MCF 10A (cell line): ENCODE measurements at regions of chr3 and their contacts with region 1.

Region 1: GRCh38 chr3:94249585-94249984 is 186.7 kb downstream of the NSUN3 start:
- DNase-seq: peak; percentile 81
- H3K4me3 Mint-ChIP-seq: no peak overlapping the region
- H3K27ac Mint-ChIP-seq: no peak overlapping the region
- H3K4me1 Mint-ChIP-seq: peaks cover 5% of the 10 kb centered on the region
- H3K27me3 Mint-ChIP-seq: peaks cover 77% of the 10 kb centered on the region
- CTCF ChIP-seq: peak; percentile 82

Region 2: DNA sequence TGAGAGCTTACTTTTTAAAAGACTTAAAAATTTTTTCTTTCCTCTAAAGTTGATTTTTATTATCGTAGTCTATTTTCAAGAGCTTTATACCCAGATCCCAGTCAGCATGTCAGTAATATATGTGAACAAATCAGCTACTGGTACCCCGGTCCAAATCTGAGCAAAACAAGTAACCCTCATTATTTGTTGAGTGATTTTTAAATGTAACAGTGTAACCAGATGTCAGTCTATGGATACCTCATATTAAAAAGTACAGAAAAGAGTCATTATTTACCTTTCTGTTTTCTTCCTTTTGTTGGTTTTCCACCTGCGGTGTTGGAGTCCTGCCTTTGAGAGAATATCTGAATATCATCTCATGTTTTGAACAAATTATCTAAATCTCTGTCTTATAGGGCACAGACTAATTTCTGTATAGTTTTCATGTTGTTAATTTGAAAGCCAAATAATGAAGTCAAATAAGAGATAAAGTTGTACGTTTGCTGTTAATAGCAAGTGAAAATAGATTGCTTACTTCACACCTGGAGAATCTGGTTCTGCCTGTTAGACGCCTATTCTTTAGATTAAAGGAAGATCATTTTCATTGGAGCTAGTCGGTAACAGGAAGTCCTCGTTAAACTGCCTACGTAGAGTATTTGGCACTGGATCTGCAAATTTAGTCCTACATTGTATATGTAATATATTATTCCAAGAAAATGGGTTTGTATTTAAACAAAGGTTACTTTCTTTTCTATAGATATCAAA is 221.3 kb before region 1 on chr3 and contains the start of gene STX19:
- CTCF ChIA-PET with region 1: no interaction called
- POLR2A ChIA-PET with region 1: no interaction called
- intact Hi-C with region 1: no loop called
- DNase-seq: no peak
- H3K4me3 Mint-ChIP-seq: peak within 1 kb of the TSS; percentile 52
- H3K27ac Mint-ChIP-seq: peak within 1 kb of the TSS; percentile 35
- H3K4me1 Mint-ChIP-seq: peaks cover 9% of the 10 kb centered on the region
- H3K27me3 Mint-ChIP-seq: no peaks in the 10 kb centered on the region
- CTCF ChIP-seq: no peak
- total RNA-seq, gene STX19: 0.27 TPM in 1 of 2 replicates, not detected in the other

Region 3: GRCh38 chr3:94115482-94115881 is 134.1 kb before region 1 on chr3:
- CTCF ChIA-PET with region 1: interaction called, 3 read pairs
- POLR2A ChIA-PET with region 1: no interaction called
- intact Hi-C with region 1: loop called (anchors 1 kb)
- DNase-seq: peak; percentile 44
- H3K4me3 Mint-ChIP-seq: no peak overlapping the region
- H3K27ac Mint-ChIP-seq: no peak overlapping the region
- H3K4me1 Mint-ChIP-seq: no peaks in the 10 kb centered on the region
- H3K27me3 Mint-ChIP-seq: no peaks in the 10 kb centered on the region
- CTCF ChIP-seq: peak; percentile 54

Region 4: DNA sequence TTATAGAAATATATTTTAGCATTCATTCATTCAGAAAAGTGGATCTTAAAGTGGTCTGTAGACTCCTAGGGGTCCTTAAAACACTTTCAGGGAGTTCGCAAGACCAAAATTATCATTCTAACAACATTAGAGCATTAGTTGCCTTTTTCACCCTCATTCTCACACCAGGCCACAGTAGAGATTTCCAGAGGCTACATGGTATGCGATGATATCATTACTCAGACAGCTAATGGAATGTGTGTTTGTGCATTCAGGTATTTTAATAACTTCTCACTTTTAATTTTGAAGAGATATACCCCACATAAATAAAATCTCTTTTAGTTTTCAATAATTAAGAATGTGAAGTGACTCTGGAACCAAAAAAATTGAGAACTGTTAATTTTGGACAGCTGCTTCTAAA is 20.2 kb after region 1 on chr3:
- CTCF ChIA-PET with region 1: interaction called, 39 read pairs
- POLR2A ChIA-PET with region 1: interaction called, 3 read pairs
- intact Hi-C with region 1: no loop called
- DNase-seq: no peak
- H3K4me3 Mint-ChIP-seq: no peak overlapping the region
- H3K27ac Mint-ChIP-seq: no peak overlapping the region
- H3K4me1 Mint-ChIP-seq: no peaks in the 10 kb centered on the region
- H3K27me3 Mint-ChIP-seq: peaks cover 15% of the 10 kb centered on the region
- CTCF ChIP-seq: no peak

Region 5: DNA sequence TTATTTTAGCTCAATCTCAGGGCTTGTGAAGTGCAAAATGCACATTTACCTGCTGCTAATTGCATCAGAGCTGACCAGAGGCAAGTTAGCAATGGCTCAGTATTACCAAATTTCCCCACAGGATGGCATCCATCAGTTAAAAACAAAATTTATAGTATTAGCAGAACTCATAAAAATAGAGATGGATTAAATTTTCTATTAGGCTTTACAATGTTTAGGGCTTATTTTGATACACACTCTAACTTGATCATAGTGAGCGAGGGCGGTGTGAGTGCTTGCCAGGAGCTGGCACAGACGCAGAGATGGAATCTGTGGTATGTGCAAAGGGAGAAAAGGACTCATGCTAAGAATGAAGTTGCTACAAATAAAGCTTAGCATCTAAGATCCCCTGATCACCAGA is 54.3 kb after region 1 on chr3:
- CTCF ChIA-PET with region 1: interaction called, 21 read pairs
- POLR2A ChIA-PET with region 1: no interaction called
- intact Hi-C with region 1: no loop called
- DNase-seq: peak; percentile 15
- H3K4me3 Mint-ChIP-seq: no peak overlapping the region
- H3K27ac Mint-ChIP-seq: no peak overlapping the region
- H3K4me1 Mint-ChIP-seq: no peaks in the 10 kb centered on the region
- H3K27me3 Mint-ChIP-seq: no peaks in the 10 kb centered on the region
- CTCF ChIP-seq: no peak